BJ (cell line): ENCODE measurements at regions of chr5 and their contacts with region 1.

Region 1: GRCh38 chr5:175464074-175464941 is 14.1 kb upstream of the SFXN1 start:
- DNase-seq: no peak
- H3K4me3 ChIP-seq: no peak overlapping the region
- H3K27me3 ChIP-seq: peaks cover 5% of the 10 kb centered on the region
- CTCF ChIP-seq: peak; percentile 82

Region 2: GRCh38 chr5:175047048-175047447 is 417.3 kb before region 1 on chr5:
- CTCF ChIA-PET with region 1: no interaction called
- POLR2A ChIA-PET with region 1: no interaction called
- DNase-seq: no peak
- H3K4me3 ChIP-seq: no peak overlapping the region
- H3K27me3 ChIP-seq: no peaks in the 10 kb centered on the region
- CTCF ChIP-seq: no peak

Region 3: DNA sequence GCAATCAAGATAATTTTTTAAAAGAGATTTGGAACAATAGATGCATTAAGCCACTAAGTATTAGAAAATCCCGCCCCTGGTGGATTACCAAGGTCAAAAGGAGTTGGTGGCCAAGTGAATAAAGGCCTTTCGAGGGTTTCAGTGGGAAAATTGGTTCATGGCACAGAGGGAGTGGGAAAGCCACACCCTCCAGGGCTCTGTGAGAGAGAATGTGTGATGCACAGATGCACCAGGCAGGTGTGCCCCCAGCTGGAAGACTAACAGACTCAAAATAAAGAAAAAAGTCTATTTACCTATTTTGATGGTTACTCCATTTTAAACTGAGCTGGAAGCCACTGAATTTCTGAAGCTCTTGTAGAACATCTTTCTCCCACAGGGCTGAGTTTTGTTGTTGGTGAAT is 298.3 kb before region 1 on chr5:
- CTCF ChIA-PET with region 1: no interaction called
- POLR2A ChIA-PET with region 1: no interaction called
- DNase-seq: no peak
- H3K4me3 ChIP-seq: no peak overlapping the region
- H3K27me3 ChIP-seq: no peaks in the 10 kb centered on the region
- CTCF ChIP-seq: no peak

Region 4: GRCh38 chr5:175417384-175417783 is 46.9 kb before region 1 on chr5:
- CTCF ChIA-PET with region 1: no interaction called
- POLR2A ChIA-PET with region 1: no interaction called
- DNase-seq: no peak
- H3K4me3 ChIP-seq: no peak overlapping the region
- H3K27me3 ChIP-seq: no peaks in the 10 kb centered on the region
- CTCF ChIP-seq: no peak

Region 5: GRCh38 chr5:175478384-175479124 is 14.2 kb after region 1 on chr5 and contains the start of gene SFXN1:
- CTCF ChIA-PET with region 1: interaction called, 33 read pairs
- POLR2A ChIA-PET with region 1: no interaction called
- DNase-seq: no peak
- H3K4me3 ChIP-seq: peak within 1 kb of the TSS; percentile 89
- H3K27me3 ChIP-seq: no peaks in the 10 kb centered on the region
- CTCF ChIP-seq: no peak
- polyA plus RNA-seq, gene SFXN1: 89.9 and 103 TPM in 2 replicates

Region 6: DNA sequence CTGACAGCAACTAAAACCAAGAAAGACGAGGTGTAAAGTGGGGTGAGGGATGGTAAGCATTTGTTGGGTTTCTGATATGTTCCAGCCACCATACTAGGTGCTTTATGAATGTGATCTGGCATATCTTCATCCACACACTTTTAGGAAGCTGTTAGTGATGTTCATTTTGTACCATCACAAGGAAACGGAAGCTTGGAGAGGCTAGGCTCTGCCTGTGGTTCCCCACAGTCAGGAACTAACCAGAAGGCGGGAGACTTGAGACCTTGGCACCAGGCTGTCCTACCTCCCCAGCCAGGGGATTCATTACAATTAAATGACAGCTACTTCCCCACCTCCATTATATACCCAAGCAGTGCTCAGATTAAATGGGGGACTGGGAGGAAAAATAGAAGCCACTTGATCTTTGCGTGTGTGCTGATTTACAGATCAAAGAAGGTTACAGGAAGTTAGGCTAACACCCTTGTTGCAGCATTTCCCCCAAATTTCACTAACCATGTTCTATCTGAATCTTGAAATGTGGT is 57.1 kb after region 1 on chr5:
- CTCF ChIA-PET with region 1: no interaction called
- POLR2A ChIA-PET with region 1: no interaction called
- DNase-seq: no peak
- H3K4me3 ChIP-seq: no peak overlapping the region
- H3K27me3 ChIP-seq: no peaks in the 10 kb centered on the region
- CTCF ChIP-seq: no peak